ENCODE measurements at regions of chr1 and their contacts with region 1.

Region 1: GRCh38 chr1:9576903-9577302 is 11.8 kb upstream of the TMEM201 start:
- DNase-seq: no peak
- H3K4me3 ChIP-seq: no peak overlapping the region
- H3K27ac ChIP-seq: no peak overlapping the region
- H3K4me1 ChIP-seq: no peaks in the 10 kb centered on the region
- H3K27me3 ChIP-seq: no peaks in the 10 kb centered on the region
- CTCF ChIP-seq: no peak

Region 2: GRCh38 chr1:9494929-9495758 is 81.8 kb before region 1 on chr1:
- intact Hi-C with region 1: loop called (anchors 5 kb)
- DNase-seq: peak in 4 of 5 donors; percentile 50 to 75 (median 68)
- H3K4me3 ChIP-seq: peak overlapping the region in 1 of 3 donors; percentile 47
- H3K27ac ChIP-seq: peak overlapping the region in 1 of 2 donors; percentile 10
- H3K4me1 ChIP-seq: no peaks in the 10 kb centered on the region
- H3K27me3 ChIP-seq: no peaks in the 10 kb centered on the region
- CTCF ChIP-seq: peak; percentile 92